IMR-90 (cell line): ENCODE measurements at regions of chr6 and their contacts with region 1.

Region 1: GRCh38 chr6:90296346-90297114 is at the start of gene BACH2:
- DNase-seq: peak; percentile 92
- ATAC-seq: peak; percentile 81
- H3K4me3 ChIP-seq: peak within 1 kb of the TSS; percentile 56
- H3K27ac ChIP-seq: peak within 1 kb of the TSS; percentile 13; the same call in 1 of the 2 replicates
- H3K4me1 ChIP-seq: no peaks in the 10 kb centered on the region; the same call in 1 of the 2 replicates
- H3K27me3 ChIP-seq: peaks cover 19% of the 10 kb centered on the region
- CTCF ChIP-seq: peak; percentile 32
- POLR2A ChIP-seq: peak; percentile 64
- RAD21 ChIP-seq: peak; percentile 36; the same call in 1 of the 2 replicates
- total RNA-seq, gene BACH2: 1.1 and 1.3 TPM in 2 replicates

Region 2: GRCh38 chr6:89940225-89941027 is 356.1 kb before region 1 on chr6:
- CTCF ChIA-PET with region 1: interaction called, 4 read pairs
- POLR2A ChIA-PET with region 1: no interaction called
- dilution Hi-C with region 1: no loop called
- in situ Hi-C with region 1: no loop called
- intact Hi-C with region 1: loop called (anchors 2 kb)
- DNase-seq: peak; percentile 86
- ATAC-seq: peak; percentile 99
- H3K4me3 ChIP-seq: no peak overlapping the region
- H3K27ac ChIP-seq: no peak overlapping the region
- H3K4me1 ChIP-seq: no peaks in the 10 kb centered on the region; the same call in 1 of the 2 replicates
- H3K27me3 ChIP-seq: no peaks in the 10 kb centered on the region
- CTCF ChIP-seq: peak; percentile 92
- POLR2A ChIP-seq: no peak
- RAD21 ChIP-seq: peak; percentile 97

Region 3: DNA sequence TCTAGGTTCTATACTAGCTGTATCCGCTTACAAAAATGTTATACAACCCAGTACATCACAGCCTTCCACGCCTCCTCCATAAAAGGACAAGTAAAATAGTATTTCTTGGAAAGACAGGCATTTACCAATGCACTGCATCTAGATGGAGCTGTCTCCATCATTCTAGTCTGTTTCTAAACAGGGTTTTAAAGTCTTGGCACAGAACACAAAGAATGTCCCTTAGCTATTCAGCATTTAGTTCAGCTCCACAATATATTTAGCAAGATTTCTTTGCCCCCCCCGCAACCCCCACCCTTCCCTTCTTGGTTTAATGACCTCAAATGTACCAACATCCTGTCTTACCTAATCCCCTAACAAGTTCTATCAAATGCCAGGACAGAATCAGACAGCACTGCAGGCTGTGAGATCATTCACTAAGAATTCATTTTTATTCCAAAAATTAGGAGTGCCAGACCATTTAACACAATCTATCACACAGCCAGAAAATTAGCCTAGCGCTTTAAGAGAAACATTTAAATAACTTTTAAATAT is 198.5 kb before region 1 on chr6:
- CTCF ChIA-PET with region 1: interaction called, 3 read pairs
- POLR2A ChIA-PET with region 1: no interaction called
- dilution Hi-C with region 1: no loop called
- in situ Hi-C with region 1: loop called (anchors 10 kb)
- intact Hi-C with region 1: loop called (anchors 1 kb)
- DNase-seq: peak; percentile 89
- ATAC-seq: peak; percentile 86
- H3K4me3 ChIP-seq: no peak overlapping the region
- H3K27ac ChIP-seq: peak overlapping the region; percentile 9; the same call in 1 of the 2 replicates
- H3K4me1 ChIP-seq: peaks cover 12% of the 10 kb centered on the region
- H3K27me3 ChIP-seq: no peaks in the 10 kb centered on the region
- CTCF ChIP-seq: peak; percentile 59
- POLR2A ChIP-seq: no peak
- RAD21 ChIP-seq: peak; percentile 58

Region 4: GRCh38 chr6:90216072-90216977 is 80.2 kb before region 1 on chr6:
- CTCF ChIA-PET with region 1: interaction called, 3 read pairs
- POLR2A ChIA-PET with region 1: no interaction called
- dilution Hi-C with region 1: no loop called
- in situ Hi-C with region 1: no loop called
- intact Hi-C with region 1: loop called (anchors 2 kb)
- DNase-seq: peak; percentile 35
- ATAC-seq: no peak
- H3K4me3 ChIP-seq: no peak overlapping the region
- H3K27ac ChIP-seq: no peak overlapping the region
- H3K4me1 ChIP-seq: peaks cover 19% of the 10 kb centered on the region
- H3K27me3 ChIP-seq: no peaks in the 10 kb centered on the region
- CTCF ChIP-seq: no peak
- POLR2A ChIP-seq: no peak
- RAD21 ChIP-seq: no peak

Region 5: DNA sequence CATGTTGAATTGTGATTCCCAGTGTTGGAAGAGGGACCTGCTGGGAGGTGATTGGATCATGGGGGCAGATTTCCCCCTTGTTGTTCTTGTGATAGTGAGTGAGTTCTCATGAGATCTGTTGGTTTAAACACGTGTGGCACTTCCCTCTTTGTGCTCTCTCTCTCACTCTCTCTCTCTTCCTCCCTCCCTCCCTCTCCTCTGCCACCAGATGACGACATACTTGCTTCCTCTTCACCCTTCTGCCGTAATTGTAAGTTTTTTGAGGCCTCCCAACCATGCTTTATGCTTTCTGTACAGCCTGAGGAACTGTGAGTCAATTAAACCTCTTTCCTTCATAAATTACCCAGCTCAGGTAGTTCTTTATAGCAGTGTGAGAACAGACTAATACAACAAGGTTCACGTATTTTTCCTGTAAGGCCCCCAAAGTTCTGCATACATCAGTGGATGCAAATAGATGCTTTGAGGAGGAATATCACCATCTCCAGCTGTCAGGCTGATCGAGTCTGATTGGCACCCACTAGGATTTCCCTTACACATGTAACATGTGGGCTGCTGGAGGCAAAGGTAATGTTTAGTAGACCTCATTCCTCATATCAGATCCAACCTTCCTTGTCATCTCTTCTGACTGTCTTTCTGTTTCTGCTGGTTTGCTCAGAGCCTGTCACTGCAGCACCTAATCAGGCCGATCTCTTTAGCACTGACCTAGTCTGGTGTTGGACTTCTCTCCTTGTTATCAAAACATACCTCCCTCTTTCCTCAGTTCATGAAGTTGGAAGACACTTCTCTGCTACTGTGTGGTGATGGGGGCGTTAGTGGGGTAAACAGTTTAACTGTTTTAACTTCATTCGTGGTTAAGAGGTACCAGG is 54.4 kb after region 1 on chr6:
- CTCF ChIA-PET with region 1: no interaction called
- POLR2A ChIA-PET with region 1: no interaction called
- dilution Hi-C with region 1: no loop called
- in situ Hi-C with region 1: no loop called
- intact Hi-C with region 1: no loop called
- DNase-seq: peak; percentile 17
- ATAC-seq: no peak
- H3K4me3 ChIP-seq: no peak overlapping the region
- H3K27ac ChIP-seq: no peak overlapping the region
- H3K4me1 ChIP-seq: no peaks in the 10 kb centered on the region
- H3K27me3 ChIP-seq: peaks cover 23% of the 10 kb centered on the region
- CTCF ChIP-seq: no peak
- POLR2A ChIP-seq: no peak
- RAD21 ChIP-seq: no peak

Region 6: GRCh38 chr6:90386399-90387382 is 90.2 kb after region 1 on chr6:
- CTCF ChIA-PET with region 1: no interaction called
- POLR2A ChIA-PET with region 1: no interaction called
- dilution Hi-C with region 1: no loop called
- in situ Hi-C with region 1: loop called (anchors 5 kb)
- intact Hi-C with region 1: no loop called
- DNase-seq: no peak
- ATAC-seq: no peak
- H3K4me3 ChIP-seq: no peak overlapping the region
- H3K27ac ChIP-seq: no peak overlapping the region
- H3K4me1 ChIP-seq: peaks cover 2% of the 10 kb centered on the region; the same call in 1 of the 2 replicates
- H3K27me3 ChIP-seq: peaks cover 19% of the 10 kb centered on the region
- CTCF ChIP-seq: no peak
- POLR2A ChIP-seq: no peak
- RAD21 ChIP-seq: no peak

Region 7: DNA sequence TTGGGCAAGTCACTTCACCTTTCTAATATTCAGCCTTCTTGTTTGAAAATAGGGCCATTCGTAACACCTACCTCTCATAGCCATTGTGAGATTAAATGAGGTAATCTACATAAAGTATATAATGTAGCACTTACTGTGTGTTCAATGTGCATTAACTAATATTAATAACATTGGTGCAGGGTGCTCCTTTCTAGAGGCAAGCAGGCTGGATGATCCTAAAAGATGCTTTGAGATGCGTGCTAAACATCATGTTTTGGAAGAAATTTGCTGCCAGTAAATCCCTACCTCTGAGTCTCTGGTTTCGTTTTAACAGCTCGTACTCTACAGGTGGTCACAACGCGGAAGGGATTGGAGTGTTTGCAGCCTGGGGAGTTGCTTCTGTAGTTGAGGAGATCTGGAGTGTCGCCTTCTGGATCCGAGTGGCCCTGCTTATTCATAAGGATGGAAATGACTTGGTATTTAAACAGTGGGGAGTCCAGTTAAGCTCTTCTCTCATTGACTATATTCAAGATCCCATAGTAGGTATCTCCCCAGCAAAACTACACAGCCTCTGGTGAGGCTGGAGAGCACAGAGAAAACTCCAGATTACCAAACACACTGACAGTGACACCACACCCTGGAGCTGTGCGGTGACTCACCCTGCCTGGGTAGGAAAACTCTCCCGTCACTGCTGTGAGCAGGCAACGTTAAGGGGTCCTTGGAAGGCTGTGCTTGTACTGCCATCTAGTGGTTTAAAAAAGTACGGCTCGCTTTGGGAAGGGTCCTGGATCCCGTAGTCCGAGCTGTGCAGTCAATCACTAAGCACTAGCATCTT is 182.5 kb after region 1 on chr6:
- CTCF ChIA-PET with region 1: no interaction called
- POLR2A ChIA-PET with region 1: no interaction called
- dilution Hi-C with region 1: no loop called
- in situ Hi-C with region 1: no loop called
- intact Hi-C with region 1: loop called (anchors 2 kb)
- DNase-seq: peak; percentile 95
- ATAC-seq: peak; percentile 99
- H3K4me3 ChIP-seq: no peak overlapping the region
- H3K27ac ChIP-seq: no peak overlapping the region
- H3K4me1 ChIP-seq: no peaks in the 10 kb centered on the region; the same call in 1 of the 2 replicates
- H3K27me3 ChIP-seq: peaks cover 5% of the 10 kb centered on the region; the same call in 1 of the 2 replicates
- CTCF ChIP-seq: peak; percentile 98
- POLR2A ChIP-seq: peak; percentile 62
- RAD21 ChIP-seq: peak; percentile 100